CD8-positive, alpha-beta T cell (primary cell): ENCODE measurements at regions of chr11 and their contacts with region 1.

Region 1: GRCh38 chr11:62123669-62124185 is at the start of gene INCENP:
- DNase-seq: peak; percentile 90 to 98 (median 94)
- ATAC-seq: peak; percentile 98
- H3K4me3 ChIP-seq: peak within 1 kb of the TSS; percentile 78 to 97
- H3K4me3 Mint-ChIP-seq: peak within 1 kb of the TSS; percentile 92
- H3K27ac ChIP-seq: peak within 1 kb of the TSS; percentile 50 to 51
- H3K27ac Mint-ChIP-seq: peak within 1 kb of the TSS; percentile 84
- H3K4me1 ChIP-seq: peaks cover 18% of the 10 kb centered on the region
- H3K4me1 Mint-ChIP-seq: peaks cover 30% of the 10 kb centered on the region
- H3K27me3 ChIP-seq: no peaks in the 10 kb centered on the region
- H3K27me3 Mint-ChIP-seq: no peaks in the 10 kb centered on the region
- CTCF ChIP-seq: no peak
- total RNA-seq, gene INCENP: 11.6 to 16.1 TPM

Region 2: GRCh38 chr11:60841797-60842667 is 1281.7 kb before region 1 on chr11 and contains the start of gene CCDC86:
- CTCF ChIA-PET with region 1: no interaction called
- POLR2A ChIA-PET with region 1: no interaction called
- intact Hi-C with region 1: loop called in 1 of 2 experiments (anchors 10 kb)
- DNase-seq: peak; percentile 97 to 100 (median 98)
- ATAC-seq: peak; percentile 97
- H3K4me3 ChIP-seq: peak within 1 kb of the TSS; percentile 84 to 93
- H3K4me3 Mint-ChIP-seq: peak within 1 kb of the TSS; percentile 93
- H3K27ac ChIP-seq: peak within 1 kb of the TSS; percentile 71 to 83
- H3K27ac Mint-ChIP-seq: peak within 1 kb of the TSS; percentile 97
- H3K4me1 ChIP-seq: peaks cover 35% of the 10 kb centered on the region
- H3K4me1 Mint-ChIP-seq: peaks cover 46% of the 10 kb centered on the region
- H3K27me3 ChIP-seq: no peaks in the 10 kb centered on the region
- H3K27me3 Mint-ChIP-seq: no peaks in the 10 kb centered on the region
- CTCF ChIP-seq: no peak
- total RNA-seq, gene CCDC86: 10.8 to 11.9 TPM

Region 3: GRCh38 chr11:60906132-60906972 is 1217.4 kb before region 1 on chr11 and contains the start of gene PRPF19:
- CTCF ChIA-PET with region 1: no interaction called
- POLR2A ChIA-PET with region 1: no interaction called
- intact Hi-C with region 1: loop called in 1 of 2 experiments (anchors 10 kb)
- DNase-seq: peak; percentile 98 to 100 (median 99)
- ATAC-seq: peak; percentile 92
- H3K4me3 ChIP-seq: peak within 1 kb of the TSS; percentile 61 to 81
- H3K4me3 Mint-ChIP-seq: peak within 1 kb of the TSS; percentile 89
- H3K27ac ChIP-seq: peak within 1 kb of the TSS; percentile 79 to 93
- H3K27ac Mint-ChIP-seq: peak within 1 kb of the TSS; percentile 99
- H3K4me1 ChIP-seq: peaks cover 45% of the 10 kb centered on the region
- H3K4me1 Mint-ChIP-seq: peaks cover 71% of the 10 kb centered on the region
- H3K27me3 ChIP-seq: no peaks in the 10 kb centered on the region
- H3K27me3 Mint-ChIP-seq: no peaks in the 10 kb centered on the region
- CTCF ChIP-seq: no peak
- total RNA-seq, gene PRPF19: 96.1 to 99.4 TPM

Region 4: DNA sequence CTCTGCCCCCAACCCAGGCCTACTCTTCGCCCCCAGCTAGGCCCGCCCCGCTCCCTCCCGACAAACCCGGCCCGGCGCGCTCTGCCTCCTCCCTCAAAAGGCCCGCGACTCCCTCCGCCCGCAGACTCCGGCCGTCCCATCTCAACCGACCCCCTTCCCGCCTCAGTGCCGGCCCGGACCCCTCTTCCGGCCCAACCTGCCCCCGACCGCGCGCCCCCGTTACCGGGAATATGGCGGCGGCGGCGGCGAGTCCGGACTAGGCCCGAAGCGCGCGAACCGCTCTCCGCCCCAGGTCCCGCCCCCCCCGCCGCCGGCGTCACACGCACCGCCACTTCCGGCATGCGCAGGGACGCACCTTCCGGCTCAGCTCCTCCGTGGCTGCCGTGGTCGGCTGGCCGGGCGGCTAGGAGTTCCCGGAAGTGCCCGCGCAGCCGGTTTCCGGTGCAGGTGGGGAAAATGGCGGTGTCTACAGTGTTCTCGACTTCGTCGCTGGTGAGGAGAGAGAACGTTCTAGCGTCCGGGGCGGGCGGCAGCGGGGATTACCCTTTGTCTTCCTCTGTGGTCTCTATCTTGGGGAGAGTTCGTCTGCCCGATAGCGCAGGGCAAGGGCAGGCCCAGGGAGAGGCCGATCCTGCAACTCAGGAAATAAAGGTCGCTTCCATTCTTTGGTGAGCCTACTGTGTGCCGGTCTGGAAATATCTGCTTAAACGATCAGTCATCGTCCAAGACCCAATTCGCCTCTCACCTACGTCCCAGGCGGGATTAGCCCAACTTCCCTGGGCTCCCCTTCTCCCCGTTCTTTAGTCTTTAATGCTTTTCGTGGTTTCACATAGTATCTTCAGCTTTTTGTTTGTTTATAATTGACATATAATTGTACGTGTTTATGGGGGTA is 693.8 kb before region 1 on chr11 and contains the starts of genes CPSF7 and SDHAF2:
- CTCF ChIA-PET with region 1: no interaction called
- POLR2A ChIA-PET with region 1: no interaction called
- intact Hi-C with region 1: loop called in 1 of 2 experiments (anchors 5 kb)
- DNase-seq: peak; percentile 93 to 99 (median 98)
- ATAC-seq: peak; percentile 80
- H3K4me3 ChIP-seq: peak within 1 kb of the TSS; percentile 70 to 95
- H3K4me3 Mint-ChIP-seq: peak within 1 kb of the TSS; percentile 97
- H3K27ac ChIP-seq: peak within 1 kb of the TSS; percentile 98 to 100
- H3K27ac Mint-ChIP-seq: peak within 1 kb of the TSS; percentile 100
- H3K4me1 ChIP-seq: peaks cover 53% of the 10 kb centered on the region
- H3K4me1 Mint-ChIP-seq: peaks cover 72% of the 10 kb centered on the region
- H3K27me3 ChIP-seq: no peaks in the 10 kb centered on the region
- H3K27me3 Mint-ChIP-seq: no peaks in the 10 kb centered on the region
- CTCF ChIP-seq: no peak
- total RNA-seq, gene CPSF7: 106 to 111 TPM
- total RNA-seq, gene SDHAF2: 31.4 to 33.0 TPM

Region 5: DNA sequence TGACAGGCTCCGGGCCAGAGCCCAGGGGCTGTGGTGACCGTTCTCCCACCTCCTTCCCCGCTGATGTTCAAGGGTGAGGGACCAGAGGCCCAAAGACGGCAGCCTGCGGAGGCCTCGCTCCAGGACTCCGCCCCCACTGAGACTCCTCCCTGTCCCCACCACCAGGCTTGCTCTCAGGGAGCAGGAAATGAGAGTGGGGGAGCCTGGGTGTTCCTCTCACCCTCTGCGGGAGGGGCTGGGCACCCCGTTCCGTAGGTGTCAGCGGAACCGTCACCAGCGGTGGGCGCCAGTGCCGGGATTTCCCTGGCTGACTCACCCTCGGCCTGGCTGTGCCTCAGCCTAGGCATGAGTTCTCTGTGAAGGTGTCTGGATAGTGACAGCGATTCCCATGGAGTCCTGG is 427.8 kb before region 1 on chr11:
- CTCF ChIA-PET with region 1: no interaction called
- POLR2A ChIA-PET with region 1: no interaction called
- intact Hi-C with region 1: loop called in 1 of 2 experiments (anchors 5 kb)
- DNase-seq: peak; percentile 80 to 97 (median 90)
- ATAC-seq: peak; percentile 99
- H3K4me3 ChIP-seq: peak overlapping the region; percentile 21 to 52
- H3K4me3 Mint-ChIP-seq: peak overlapping the region; percentile 55
- H3K27ac ChIP-seq: peak overlapping the region in 1 of 2 experiments; percentile 14
- H3K27ac Mint-ChIP-seq: peak overlapping the region; percentile 79
- H3K4me1 ChIP-seq: peaks cover 36% of the 10 kb centered on the region
- H3K4me1 Mint-ChIP-seq: peaks cover 25% of the 10 kb centered on the region
- H3K27me3 ChIP-seq: no peaks in the 10 kb centered on the region
- H3K27me3 Mint-ChIP-seq: no peaks in the 10 kb centered on the region
- CTCF ChIP-seq: no peak

Region 6: GRCh38 chr11:61967116-61967923 is 156.4 kb before region 1 on chr11 and contains the start of gene FTH1:
- CTCF ChIA-PET with region 1: no interaction called
- POLR2A ChIA-PET with region 1: interaction called, 10 read pairs
- intact Hi-C with region 1: loop called in 1 of 2 experiments (anchors 2 kb)
- DNase-seq: peak; percentile 82 to 95 (median 91)
- ATAC-seq: peak; percentile 74
- H3K4me3 ChIP-seq: peak within 1 kb of the TSS; percentile 98 to 100
- H3K4me3 Mint-ChIP-seq: peak within 1 kb of the TSS; percentile 96
- H3K27ac ChIP-seq: peak within 1 kb of the TSS; percentile 72 to 96
- H3K27ac Mint-ChIP-seq: peak within 1 kb of the TSS; percentile 98
- H3K4me1 ChIP-seq: peaks cover 43% of the 10 kb centered on the region
- H3K4me1 Mint-ChIP-seq: peaks cover 59% of the 10 kb centered on the region
- H3K27me3 ChIP-seq: no peaks in the 10 kb centered on the region
- H3K27me3 Mint-ChIP-seq: no peaks in the 10 kb centered on the region
- CTCF ChIP-seq: no peak
- total RNA-seq, gene FTH1: 2,788 to 2,859 TPM

Region 7: DNA sequence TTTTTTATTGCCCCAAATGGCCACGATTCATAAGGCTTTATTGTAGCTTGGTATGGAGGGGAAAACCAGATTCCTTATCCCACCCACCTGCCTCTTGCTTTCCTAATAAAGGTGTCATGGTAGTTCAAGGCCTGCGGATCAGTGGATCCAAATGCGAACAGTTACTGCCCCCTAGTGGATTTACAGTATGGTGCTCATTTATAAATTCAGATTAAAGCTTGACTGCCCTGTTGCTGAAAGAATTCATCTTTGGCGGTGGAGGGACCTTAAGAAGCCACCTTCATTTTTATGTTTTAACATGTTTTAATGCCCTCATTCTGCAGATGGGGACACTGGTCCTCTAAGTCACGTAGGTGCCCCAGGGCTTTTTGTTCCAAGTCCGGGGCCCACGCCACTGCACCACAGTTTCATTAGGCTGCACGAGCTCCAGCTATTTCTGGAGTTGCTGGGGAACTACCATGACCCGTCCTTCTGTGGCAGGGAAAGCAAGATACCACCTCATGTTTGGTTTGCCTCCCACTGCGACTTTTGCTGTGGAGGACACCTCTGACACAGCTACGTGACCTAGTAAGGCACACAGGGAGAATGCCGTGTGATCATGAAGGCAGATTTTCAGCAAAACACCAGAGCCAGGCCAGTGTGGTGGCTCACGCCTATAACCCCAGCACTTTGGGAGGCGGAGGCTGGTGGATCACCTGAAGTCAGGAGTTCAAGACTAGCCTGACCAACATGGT is 15.5 kb before region 1 on chr11:
- CTCF ChIA-PET with region 1: interaction called, 14 read pairs
- POLR2A ChIA-PET with region 1: no interaction called
- intact Hi-C with region 1: loop called (anchors 1 kb)
- DNase-seq: peak in 7 of 9 experiments; percentile 8 to 80 (median 45)
- ATAC-seq: peak; percentile 65
- H3K4me3 ChIP-seq: no peak overlapping the region
- H3K4me3 Mint-ChIP-seq: no peak overlapping the region
- H3K27ac ChIP-seq: no peak overlapping the region
- H3K27ac Mint-ChIP-seq: no peak overlapping the region
- H3K4me1 ChIP-seq: peaks cover 19% of the 10 kb centered on the region
- H3K4me1 Mint-ChIP-seq: peaks cover 19% of the 10 kb centered on the region
- H3K27me3 ChIP-seq: no peaks in the 10 kb centered on the region
- H3K27me3 Mint-ChIP-seq: no peaks in the 10 kb centered on the region
- CTCF ChIP-seq: peak; percentile 70